Aorta (tissue), 5 donors: ENCODE measurements at regions of chr11 and their contacts with region 1.

Region 1: DNA sequence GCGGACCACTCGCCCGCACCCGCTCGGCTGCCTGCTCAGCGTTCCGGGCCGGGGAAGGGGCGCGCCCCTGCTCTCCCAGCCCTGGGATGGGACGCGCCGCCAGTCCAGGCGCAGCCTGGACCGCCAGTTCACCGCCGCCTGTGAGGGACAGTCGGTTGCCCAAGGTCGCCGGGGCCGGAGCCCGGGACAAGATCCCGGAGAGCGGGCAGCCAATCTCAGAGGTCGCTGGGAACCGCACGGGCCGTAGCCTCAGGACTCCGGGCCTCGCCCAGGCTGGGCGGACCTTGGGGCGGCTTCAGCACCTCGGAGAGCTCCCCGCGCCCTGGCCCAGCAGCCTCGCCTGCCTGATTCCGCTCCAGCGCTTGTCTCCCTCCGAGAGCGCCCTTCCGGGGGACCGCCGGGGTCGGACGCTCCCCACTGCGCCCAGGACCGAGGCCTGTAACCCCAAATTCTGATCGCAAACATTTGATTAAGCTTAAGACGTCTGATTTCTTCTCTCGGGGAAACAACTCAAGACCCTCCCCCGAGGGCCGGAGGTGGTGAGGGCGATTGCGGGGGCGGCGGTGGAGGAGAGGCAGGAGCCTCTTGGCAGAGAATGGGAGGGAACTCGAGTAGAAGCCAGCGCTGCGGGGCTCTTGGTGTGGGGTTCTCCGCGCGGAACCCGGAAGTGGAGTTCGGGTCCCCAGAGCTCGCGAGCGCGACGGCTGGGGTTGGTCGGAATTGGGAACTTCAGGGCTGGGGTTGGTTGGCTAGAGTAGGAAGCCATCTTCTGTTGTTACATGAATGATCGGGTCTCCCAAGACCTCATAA is 1.1 kb upstream of the CHRM4 start:
- DNase-seq: peak; percentile 90 to 95
- ATAC-seq: peak; percentile 92
- H3K4me3 ChIP-seq: no peak overlapping the region
- H3K27ac ChIP-seq: no peak overlapping the region
- H3K4me1 ChIP-seq: no peaks in the 10 kb centered on the region
- H3K27me3 ChIP-seq: no peaks in the 10 kb centered on the region

Region 2: DNA sequence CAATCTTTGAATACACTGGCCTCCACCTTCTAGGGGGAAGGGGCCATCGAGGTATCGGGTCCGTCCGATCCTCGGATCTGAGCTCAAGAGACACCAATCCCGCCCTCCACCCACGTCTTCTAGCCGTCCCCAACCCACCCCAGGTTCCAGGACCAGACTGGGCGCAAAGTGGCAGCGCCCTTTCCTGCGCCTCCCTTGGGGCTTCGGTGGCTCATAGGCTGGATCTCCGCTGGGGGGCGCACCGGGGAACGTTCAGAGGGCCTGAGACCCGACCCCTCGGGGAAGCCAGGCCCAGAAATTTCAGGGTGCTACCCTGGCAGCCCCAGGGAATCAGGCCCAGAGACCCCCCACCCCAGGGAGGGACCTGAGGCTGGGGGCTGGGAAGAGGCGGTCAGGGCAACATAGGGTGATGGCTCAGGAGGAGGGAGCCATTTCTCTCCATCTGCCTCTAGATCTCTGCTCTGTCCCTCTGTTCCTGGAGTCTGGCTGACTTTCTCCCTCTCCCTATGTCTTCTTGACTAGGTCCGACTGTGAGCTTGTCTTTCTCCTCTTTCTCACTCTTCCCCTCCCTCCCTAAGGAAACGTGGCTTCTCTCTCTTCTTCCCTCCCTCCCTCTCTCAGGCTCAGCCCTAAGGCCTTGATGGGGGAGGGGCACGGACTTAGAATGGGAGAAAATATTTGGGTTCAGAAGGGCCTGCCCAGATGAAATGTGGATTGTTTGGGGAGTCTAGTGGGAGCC is 114.1 kb before region 1 on chr11:
- intact Hi-C with region 1: no loop called
- DNase-seq: peak; percentile 60 to 85
- ATAC-seq: peak; percentile 49
- H3K4me3 ChIP-seq: no peak overlapping the region
- H3K27ac ChIP-seq: no peak overlapping the region
- H3K4me1 ChIP-seq: no peaks in the 10 kb centered on the region
- H3K27me3 ChIP-seq: no peaks in the 10 kb centered on the region

Region 3: GRCh38 chr11:46352063-46352841 is 40.4 kb before region 1 on chr11:
- intact Hi-C with region 1: no loop called
- DNase-seq: peak in 1 of 2 donors; percentile 69
- ATAC-seq: no peak
- H3K4me3 ChIP-seq: no peak overlapping the region
- H3K27ac ChIP-seq: no peak overlapping the region
- H3K4me1 ChIP-seq: peaks cover 0 to 2% of the 10 kb centered on the region in 2 donors
- H3K27me3 ChIP-seq: no peaks in the 10 kb centered on the region

Region 4: GRCh38 chr11:46445920-46446771 is 53.5 kb after region 1 on chr11:
- intact Hi-C with region 1: no loop called
- DNase-seq: no peak
- ATAC-seq: no peak
- H3K4me3 ChIP-seq: no peak overlapping the region
- H3K27ac ChIP-seq: no peak overlapping the region
- H3K4me1 ChIP-seq: peaks cover 0 to 7% of the 10 kb centered on the region in 2 donors
- H3K27me3 ChIP-seq: no peaks in the 10 kb centered on the region

Region 5: DNA sequence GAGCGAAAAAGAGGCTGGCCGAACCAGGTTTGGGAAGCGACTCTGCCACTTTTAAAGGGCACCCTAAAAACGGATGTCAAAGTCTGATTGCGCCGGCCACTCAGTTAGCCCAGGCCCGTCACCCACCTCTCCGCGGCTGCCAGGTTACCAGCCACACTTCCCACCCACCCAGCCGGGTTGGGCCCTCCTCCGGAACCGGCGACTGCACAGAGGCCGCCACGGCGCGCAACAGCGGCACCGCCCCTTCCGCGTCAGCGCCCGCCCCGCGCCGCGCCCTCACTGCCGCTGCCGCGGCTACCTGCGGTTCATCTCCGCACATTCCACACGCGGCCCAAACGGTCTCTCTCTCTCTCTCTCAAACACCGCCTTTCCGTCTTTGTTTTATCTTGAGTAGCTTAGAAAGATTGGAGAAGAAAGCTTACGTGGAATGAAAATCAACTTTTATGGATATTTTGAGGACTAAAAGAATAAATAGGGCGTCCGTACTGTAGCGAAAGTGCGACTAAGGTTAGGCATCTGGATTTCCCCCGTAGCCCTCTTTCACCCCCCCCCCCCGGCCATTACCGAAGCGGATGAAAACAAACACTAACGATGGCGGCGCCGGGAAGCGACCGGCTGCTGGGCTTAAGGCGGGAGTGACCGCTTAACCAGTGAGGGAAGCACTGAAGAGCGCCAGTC is 224.5 kb after region 1 on chr11 and contains the starts of genes ATG13 and HARBI1:
- intact Hi-C with region 1: loop called in 1 of 2 experiments (anchors 5 kb)
- DNase-seq: peak; percentile 92 to 96
- ATAC-seq: peak; percentile 99
- H3K4me3 ChIP-seq: peak within 1 kb of the TSS; percentile 95 to 100
- H3K27ac ChIP-seq: peak within 1 kb of the TSS; percentile 80 to 96
- H3K4me1 ChIP-seq: peaks cover 0 to 2% of the 10 kb centered on the region in 2 donors
- H3K27me3 ChIP-seq: no peaks in the 10 kb centered on the region
- total RNA-seq, gene ATG13: 59.6 to 72.7 TPM
- total RNA-seq, gene HARBI1: 2.3 to 3.0 TPM